Aorta (tissue), 5 donors: ENCODE measurements at regions of chr12 and their contacts with region 1.

Region 1: DNA sequence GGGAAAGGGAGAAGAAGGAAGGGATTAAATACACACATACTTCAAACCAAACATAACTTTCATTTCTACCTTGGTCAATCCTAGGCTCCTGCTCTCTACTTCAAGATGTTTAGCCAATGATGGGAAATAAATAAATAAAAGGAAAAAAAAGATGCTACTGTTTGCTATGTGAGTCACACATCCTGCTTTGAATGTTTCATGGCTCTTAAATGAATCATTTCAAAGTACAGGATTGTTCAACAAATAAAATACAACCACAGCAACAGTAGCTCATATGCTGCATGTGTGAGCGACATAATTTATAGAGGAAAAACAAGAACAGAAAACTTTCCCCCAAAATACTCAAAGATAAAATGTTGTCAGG is 54.3 kb upstream of the NPFF start:
- DNase-seq: no peak
- ATAC-seq: peak; percentile 31
- H3K4me3 ChIP-seq: no peak overlapping the region
- H3K27ac ChIP-seq: peak overlapping the region; percentile 17 to 87
- H3K4me1 ChIP-seq: peaks cover 4 to 5% of the 10 kb centered on the region in 2 donors
- H3K27me3 ChIP-seq: no peaks in the 10 kb centered on the region

Region 2: GRCh38 chr12:53659011-53659551 is 97.5 kb after region 1 on chr12:
- intact Hi-C with region 1: loop called in 1 of 2 experiments (anchors 5 kb)
- DNase-seq: peak in 1 of 2 donors; percentile 63
- ATAC-seq: peak; percentile 94
- H3K4me3 ChIP-seq: no peak overlapping the region
- H3K27ac ChIP-seq: peak overlapping the region; percentile 99 to 100
- H3K4me1 ChIP-seq: peaks cover 2 to 3% of the 10 kb centered on the region in 2 donors
- H3K27me3 ChIP-seq: no peaks in the 10 kb centered on the region